ENCODE measurements at regions of chr15 and their contacts with region 1.

Region 1: DNA sequence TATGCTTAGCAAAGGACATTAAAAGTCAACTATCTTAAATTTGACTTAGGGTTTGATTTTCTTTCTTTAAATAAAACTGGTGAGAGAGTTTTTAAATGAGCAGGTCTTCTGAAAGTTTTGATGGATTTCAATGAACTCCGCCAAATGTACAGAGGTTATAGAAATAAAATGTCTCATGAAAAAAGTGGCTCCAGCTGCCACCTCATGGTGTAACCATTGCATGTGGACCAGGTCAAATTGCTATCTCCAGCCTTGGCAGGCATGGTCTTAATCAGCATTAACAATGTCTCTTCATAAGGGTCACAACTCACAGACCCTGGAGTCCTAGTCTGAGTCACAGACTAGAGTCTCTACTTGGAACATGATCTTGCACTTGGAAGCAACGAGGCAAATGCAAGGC is 182.3 kb downstream of the ADAMTS17 start:
- DNase-seq: no peak
- ATAC-seq: no peak
- H3K4me3 Mint-ChIP-seq: no peak overlapping the region
- H3K27ac Mint-ChIP-seq: no peak overlapping the region
- H3K4me1 Mint-ChIP-seq: no peaks in the 10 kb centered on the region
- H3K27me3 Mint-ChIP-seq: no peaks in the 10 kb centered on the region
- CTCF ChIP-seq: no peak

Region 2: GRCh38 chr15:100140527-100141308 is 18.7 kb before region 1 on chr15:
- CTCF ChIA-PET with region 1: no interaction called
- POLR2A ChIA-PET with region 1: no interaction called
- intact Hi-C with region 1: loop called (anchors 1 kb)
- DNase-seq: no peak
- ATAC-seq: no peak
- H3K4me3 Mint-ChIP-seq: no peak overlapping the region
- H3K27ac Mint-ChIP-seq: no peak overlapping the region
- H3K4me1 Mint-ChIP-seq: no peaks in the 10 kb centered on the region
- H3K27me3 Mint-ChIP-seq: peaks cover 3% of the 10 kb centered on the region
- CTCF ChIP-seq: no peak

Region 3: GRCh38 chr15:100211855-100212850 is 52.7 kb after region 1 on chr15:
- CTCF ChIA-PET with region 1: no interaction called
- POLR2A ChIA-PET with region 1: no interaction called
- intact Hi-C with region 1: no loop called
- DNase-seq: no peak
- ATAC-seq: no peak
- H3K4me3 Mint-ChIP-seq: no peak overlapping the region
- H3K27ac Mint-ChIP-seq: no peak overlapping the region
- H3K4me1 Mint-ChIP-seq: no peaks in the 10 kb centered on the region
- H3K27me3 Mint-ChIP-seq: no peaks in the 10 kb centered on the region
- CTCF ChIP-seq: no peak

Measured in activated B cell treated with CpG ODN at 0.5 μM for 24 hours (primary cell).